CD4-positive, alpha-beta T cell (primary cell): ENCODE measurements at regions of chr7 and their contacts with region 1.

Region 1: DNA sequence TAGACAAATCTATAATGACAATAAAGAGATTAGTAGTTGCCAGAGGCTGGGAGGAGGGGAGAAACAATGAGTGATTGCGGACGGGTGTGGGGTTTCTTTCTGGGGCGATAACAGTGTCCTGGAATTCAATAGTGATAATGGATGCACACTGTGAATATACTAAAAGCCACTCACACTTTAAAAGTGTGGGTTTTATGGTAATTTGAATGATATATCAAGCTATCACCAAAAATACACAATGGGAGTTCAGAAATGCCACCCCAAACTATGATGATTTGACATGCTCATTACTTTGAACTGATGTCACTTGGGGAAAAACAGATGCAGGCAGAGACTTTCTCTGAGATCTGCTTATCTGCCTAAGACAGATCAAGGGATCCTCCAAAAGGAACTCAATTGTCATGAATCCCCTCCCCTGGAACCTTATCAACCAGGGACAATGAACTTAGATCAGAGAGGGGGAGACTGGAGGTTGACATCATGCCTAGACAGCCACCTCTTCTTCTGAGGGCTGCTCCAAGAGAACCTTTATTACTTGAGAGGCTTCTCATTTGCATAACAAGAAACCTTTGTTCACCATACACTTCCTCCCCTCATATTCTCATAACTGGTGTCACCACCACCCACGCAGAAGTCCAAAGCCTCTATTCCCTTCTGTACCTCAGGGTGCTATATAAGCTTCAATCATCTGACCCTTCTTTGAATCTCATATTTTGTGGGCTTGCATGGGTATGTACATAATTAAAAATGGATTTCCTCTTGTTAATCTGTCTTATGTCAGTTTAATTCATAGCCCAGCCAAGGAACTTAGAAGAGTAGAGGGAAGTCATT is 14.8 kb upstream of the ZC3HAV1 start:
- DNase-seq: no peak
- ATAC-seq: no peak
- H3K4me3 ChIP-seq: no peak overlapping the region
- H3K4me3 Mint-ChIP-seq: no peak overlapping the region
- H3K27ac ChIP-seq: no peak overlapping the region
- H3K27ac Mint-ChIP-seq: no peak overlapping the region
- H3K4me1 ChIP-seq: peaks cover 25% of the 10 kb centered on the region
- H3K4me1 Mint-ChIP-seq: peaks cover 34% of the 10 kb centered on the region
- H3K27me3 ChIP-seq: no peaks in the 10 kb centered on the region
- H3K27me3 Mint-ChIP-seq: no peaks in the 10 kb centered on the region
- CTCF ChIP-seq: no peak

Region 2: GRCh38 chr7:139016931-139017511 is 107.3 kb before region 1 on chr7:
- CTCF ChIA-PET with region 1: interaction called, 12 read pairs
- POLR2A ChIA-PET with region 1: interaction called, 5 read pairs
- intact Hi-C with region 1: loop called (anchors 1 kb)
- DNase-seq: peak; percentile 26 to 80 (median 52)
- ATAC-seq: peak; percentile 95
- H3K4me3 ChIP-seq: no peak overlapping the region
- H3K4me3 Mint-ChIP-seq: no peak overlapping the region
- H3K27ac ChIP-seq: no peak overlapping the region
- H3K27ac Mint-ChIP-seq: no peak overlapping the region
- H3K4me1 ChIP-seq: peaks cover 5% of the 10 kb centered on the region
- H3K4me1 Mint-ChIP-seq: peaks cover 7% of the 10 kb centered on the region
- H3K27me3 ChIP-seq: no peaks in the 10 kb centered on the region
- H3K27me3 Mint-ChIP-seq: peaks cover 4% of the 10 kb centered on the region
- CTCF ChIP-seq: peak; percentile 76